ENCODE measurements at regions of chr11 and their contacts with region 1.

Region 1: DNA sequence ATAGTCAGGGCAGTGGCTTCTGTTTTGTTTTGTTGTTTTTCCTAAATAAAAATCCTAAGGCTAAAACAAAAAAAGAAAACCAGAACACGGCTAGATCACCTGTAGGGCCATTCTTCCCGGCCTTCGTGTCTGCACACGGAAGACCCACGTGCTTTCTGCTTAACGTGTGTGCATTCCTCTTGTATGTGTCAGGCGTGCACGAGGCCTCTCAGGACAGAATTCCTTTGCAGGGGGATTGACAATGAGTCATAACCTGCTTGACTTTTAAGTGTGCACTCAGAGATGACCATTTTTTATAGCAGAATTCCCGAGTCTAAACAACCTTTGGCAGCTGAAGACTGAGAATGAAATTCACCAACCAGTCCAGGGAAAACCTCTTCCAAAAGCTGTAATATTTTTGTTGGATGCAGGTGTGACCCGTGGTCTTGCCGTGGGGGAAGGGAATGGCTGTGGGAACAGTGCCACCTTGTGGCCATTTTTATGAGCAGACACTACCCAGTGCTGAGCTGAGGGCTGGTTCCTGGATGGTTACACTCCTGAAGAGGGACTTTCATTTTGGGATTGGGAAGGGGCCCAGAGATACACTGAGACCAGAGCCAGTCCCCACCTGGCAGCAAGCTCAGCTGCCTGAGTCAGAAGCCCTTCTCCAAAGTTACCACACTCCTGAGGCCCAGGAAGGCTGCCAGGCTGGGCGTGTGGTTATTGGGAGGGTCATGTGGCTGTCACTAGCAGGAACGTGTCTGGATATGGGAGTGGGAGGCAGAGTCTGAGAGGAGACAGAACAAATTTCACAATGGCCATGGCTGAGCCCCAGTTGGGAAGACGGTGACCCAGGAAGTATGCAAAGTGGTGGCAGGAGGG is 35.8 kb upstream of the DKK3 start:
- DNase-seq: peak; percentile 80
- H3K4me3 Mint-ChIP-seq: peak overlapping the region; percentile 60
- H3K27ac Mint-ChIP-seq: peak overlapping the region; percentile 97
- H3K4me1 Mint-ChIP-seq: peaks cover 45% of the 10 kb centered on the region
- H3K27me3 Mint-ChIP-seq: no peaks in the 10 kb centered on the region
- CTCF ChIP-seq: peak; percentile 88

Region 2: DNA sequence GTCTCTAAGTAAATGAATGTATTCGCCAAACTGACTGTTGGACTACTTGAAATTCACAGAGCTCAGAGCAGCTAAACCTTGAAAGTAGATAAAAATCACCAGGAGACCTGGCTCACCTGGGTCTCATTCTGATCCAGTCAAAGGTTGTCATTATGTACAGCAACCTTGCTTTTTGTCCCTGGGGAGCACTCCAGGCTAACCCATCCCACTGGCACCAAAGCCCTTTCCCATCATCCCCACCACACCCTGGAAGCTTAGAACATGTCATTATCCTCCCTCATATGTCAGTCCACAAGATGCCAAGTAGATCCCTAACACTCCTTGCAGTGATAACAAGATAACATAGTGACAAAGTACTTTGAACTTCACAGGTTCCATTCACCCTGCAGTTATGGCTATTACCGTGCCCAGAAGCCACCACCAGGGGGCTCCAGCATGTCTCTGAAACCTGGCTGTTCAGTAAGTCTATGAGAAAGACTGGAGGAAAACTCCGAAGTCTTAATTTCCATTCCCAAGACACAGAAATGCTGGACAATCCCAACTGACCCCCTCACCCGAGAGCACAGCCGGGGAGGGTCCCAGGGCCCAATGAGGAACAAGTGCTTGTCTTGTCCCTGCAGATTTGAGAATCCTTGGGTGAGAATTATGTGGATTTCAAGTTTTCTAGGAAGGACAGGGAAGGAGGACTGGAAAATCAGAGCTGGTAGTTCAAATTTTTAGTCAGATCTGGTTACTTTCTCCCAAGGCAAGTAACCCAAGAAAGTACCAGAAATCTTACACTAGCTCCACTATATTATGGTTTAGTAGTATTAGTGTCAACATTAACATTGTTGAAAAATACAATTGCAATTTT is 245.4 kb before region 1 on chr11:
- CTCF ChIA-PET with region 1: interaction called, 3 read pairs
- intact Hi-C with region 1: loop called (anchors 2 kb)
- DNase-seq: peak; percentile 89
- H3K4me3 Mint-ChIP-seq: no peak overlapping the region
- H3K27ac Mint-ChIP-seq: no peak overlapping the region
- H3K4me1 Mint-ChIP-seq: no peaks in the 10 kb centered on the region
- H3K27me3 Mint-ChIP-seq: peaks cover 27% of the 10 kb centered on the region
- CTCF ChIP-seq: peak; percentile 85

Region 3: DNA sequence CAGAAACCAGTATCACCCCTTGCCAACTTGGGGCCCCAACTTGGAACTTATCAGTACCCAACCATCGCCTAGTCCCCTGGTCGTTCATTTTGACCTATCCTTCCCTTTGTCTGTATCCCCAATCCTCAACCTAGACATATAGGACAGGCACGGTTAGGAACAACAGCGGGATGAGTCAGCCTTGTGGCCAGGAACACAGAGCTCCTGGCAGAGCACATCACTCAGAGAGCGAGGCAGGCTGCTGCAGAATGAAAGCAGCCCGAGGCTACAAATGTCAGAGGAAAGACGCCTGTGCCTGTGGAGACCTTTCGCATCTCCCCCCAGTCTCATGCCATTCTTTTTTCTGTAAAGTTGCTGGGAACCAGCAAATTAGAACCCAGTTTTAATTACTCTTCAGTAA is 50.4 kb before region 1 on chr11:
- CTCF ChIA-PET with region 1: no interaction called
- intact Hi-C with region 1: loop called (anchors 5 kb)
- DNase-seq: peak; percentile 40
- H3K4me3 Mint-ChIP-seq: peak overlapping the region; percentile 10
- H3K27ac Mint-ChIP-seq: no peak overlapping the region
- H3K4me1 Mint-ChIP-seq: peaks cover 26% of the 10 kb centered on the region
- H3K27me3 Mint-ChIP-seq: no peaks in the 10 kb centered on the region
- CTCF ChIP-seq: no peak

Region 4: DNA sequence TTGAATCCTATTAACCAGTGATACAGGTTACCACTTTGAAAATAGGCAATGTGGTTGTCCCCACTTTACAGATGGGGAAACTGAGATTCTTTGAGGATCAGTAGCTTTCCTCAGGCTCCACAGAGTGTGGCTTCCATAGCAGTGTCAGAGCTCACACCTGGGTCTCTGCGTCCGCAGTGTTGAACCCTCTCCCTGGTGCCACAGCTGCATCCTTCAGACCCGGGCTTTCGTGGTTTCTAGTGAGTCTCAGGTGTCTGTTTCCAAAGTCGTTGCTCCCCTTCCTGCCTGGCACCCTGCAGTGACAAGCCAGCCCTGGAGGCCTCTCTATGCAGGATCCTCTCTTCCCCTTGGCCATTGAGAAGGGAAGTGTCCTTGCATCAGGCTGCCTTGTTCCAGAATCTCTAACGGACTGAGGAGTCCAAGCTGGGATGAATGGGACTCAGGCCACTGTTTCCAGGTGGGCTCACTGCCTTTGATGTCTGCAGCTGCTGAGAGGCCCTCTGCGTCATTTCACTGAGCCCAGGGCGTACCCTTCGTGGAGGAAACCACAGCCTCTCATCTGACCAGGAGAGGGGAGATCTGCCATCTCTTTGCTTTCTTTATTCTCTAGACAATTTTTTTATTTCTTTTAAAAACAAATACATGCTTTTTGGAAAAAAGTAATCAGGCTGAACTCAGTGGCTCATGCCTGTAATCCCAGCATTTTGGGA is 17.8 kb after region 1 on chr11:
- CTCF ChIA-PET with region 1: no interaction called
- intact Hi-C with region 1: no loop called
- DNase-seq: no peak
- H3K4me3 Mint-ChIP-seq: no peak overlapping the region
- H3K27ac Mint-ChIP-seq: no peak overlapping the region
- H3K4me1 Mint-ChIP-seq: peaks cover 41% of the 10 kb centered on the region
- H3K27me3 Mint-ChIP-seq: no peaks in the 10 kb centered on the region
- CTCF ChIP-seq: no peak

Region 5: DNA sequence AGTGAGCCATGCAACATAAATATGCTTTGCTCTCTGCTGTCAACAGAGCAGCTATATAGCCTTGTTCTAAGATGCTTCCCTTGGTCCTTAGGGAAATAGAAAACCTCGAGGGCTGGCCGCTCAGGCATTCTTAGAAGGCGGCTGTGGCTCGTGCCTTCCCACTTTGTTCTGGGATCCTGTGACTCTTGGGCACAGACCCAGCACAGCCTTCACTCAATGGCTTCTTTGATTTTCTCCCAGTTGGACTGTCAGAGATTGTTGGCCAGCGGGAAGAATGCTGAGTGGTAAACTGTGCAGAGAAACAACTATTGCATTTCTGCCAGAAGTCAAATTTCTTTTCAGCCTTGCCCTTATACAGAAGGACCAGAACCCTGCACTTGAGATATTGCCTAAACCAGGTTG is 56.7 kb after region 1 on chr11:
- CTCF ChIA-PET with region 1: interaction called, 5 read pairs
- intact Hi-C with region 1: loop called (anchors 5 kb)
- DNase-seq: no peak
- H3K4me3 Mint-ChIP-seq: no peak overlapping the region
- H3K27ac Mint-ChIP-seq: no peak overlapping the region
- H3K4me1 Mint-ChIP-seq: peaks cover 24% of the 10 kb centered on the region
- H3K27me3 Mint-ChIP-seq: no peaks in the 10 kb centered on the region
- CTCF ChIP-seq: no peak

Region 6: GRCh38 chr11:12185914-12186313 is 141.7 kb after region 1 on chr11:
- CTCF ChIA-PET with region 1: no interaction called
- intact Hi-C with region 1: no loop called
- DNase-seq: no peak
- H3K4me3 Mint-ChIP-seq: no peak overlapping the region
- H3K27ac Mint-ChIP-seq: no peak overlapping the region
- H3K4me1 Mint-ChIP-seq: peaks cover 33% of the 10 kb centered on the region
- H3K27me3 Mint-ChIP-seq: no peaks in the 10 kb centered on the region
- CTCF ChIP-seq: no peak

Region 7: GRCh38 chr11:12269104-12269441 is 224.9 kb after region 1 on chr11:
- CTCF ChIA-PET with region 1: no interaction called
- intact Hi-C with region 1: no loop called
- DNase-seq: no peak
- H3K4me3 Mint-ChIP-seq: no peak overlapping the region
- H3K27ac Mint-ChIP-seq: no peak overlapping the region
- H3K4me1 Mint-ChIP-seq: no peaks in the 10 kb centered on the region
- H3K27me3 Mint-ChIP-seq: no peaks in the 10 kb centered on the region
- CTCF ChIP-seq: no peak

Region 8: GRCh38 chr11:12281571-12282478 is 237.6 kb after region 1 on chr11:
- CTCF ChIA-PET with region 1: interaction called, 14 read pairs
- intact Hi-C with region 1: loop called (anchors 1 kb)
- DNase-seq: peak; percentile 82
- H3K4me3 Mint-ChIP-seq: no peak overlapping the region
- H3K27ac Mint-ChIP-seq: no peak overlapping the region
- H3K4me1 Mint-ChIP-seq: peaks cover 31% of the 10 kb centered on the region
- H3K27me3 Mint-ChIP-seq: no peaks in the 10 kb centered on the region
- CTCF ChIP-seq: peak; percentile 91

Region 9: GRCh38 chr11:12430955-12431354 is 386.8 kb after region 1 on chr11:
- CTCF ChIA-PET with region 1: no interaction called
- intact Hi-C with region 1: no loop called
- DNase-seq: peak; percentile 64
- H3K4me3 Mint-ChIP-seq: peak overlapping the region; percentile 53
- H3K27ac Mint-ChIP-seq: peak overlapping the region; percentile 93
- H3K4me1 Mint-ChIP-seq: peaks cover 42% of the 10 kb centered on the region
- H3K27me3 Mint-ChIP-seq: no peaks in the 10 kb centered on the region
- CTCF ChIP-seq: no peak